Activated CD4-positive, alpha-beta T cell treated with anti-CD3 and anti-CD28 coated beads, Interleukin-2, amount 10 ng/mL, durations not matched to agents 7 days and 5 days (primary cell): ENCODE measurements at regions of chr19 and their contacts with region 1.

Region 1: DNA sequence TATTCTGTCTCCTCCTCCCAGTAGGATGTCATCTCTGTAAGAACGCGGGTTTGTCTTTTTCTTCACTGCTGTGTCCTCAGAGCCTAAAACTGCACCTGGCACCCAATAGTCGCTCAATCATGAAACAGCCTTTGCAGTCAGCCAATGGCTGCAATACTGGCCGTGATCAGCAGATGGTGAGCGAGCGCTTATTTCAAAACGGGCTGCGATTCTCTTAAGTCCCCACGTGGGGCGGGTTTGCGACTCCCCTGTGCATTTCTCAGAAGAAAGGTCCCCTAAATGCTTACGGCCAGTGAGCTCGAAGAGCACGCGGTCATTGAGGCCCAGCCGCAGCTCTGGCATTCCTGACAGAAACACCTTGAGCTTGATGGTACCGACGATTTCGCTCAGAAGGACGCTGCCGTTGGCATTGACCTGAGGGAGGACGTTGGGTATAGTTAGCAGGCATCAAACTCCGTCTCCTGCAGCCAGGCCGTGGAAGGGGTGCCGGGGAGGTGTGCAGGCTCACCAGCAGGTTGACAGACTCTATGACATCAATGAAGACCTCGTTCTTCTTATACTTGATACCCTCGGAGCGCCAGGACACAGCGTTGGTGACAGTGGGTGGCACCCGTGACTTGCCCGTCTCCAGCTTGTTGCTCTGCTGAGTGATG is 6.0 kb downstream of the AP1M2 start:
- DNase-seq: peak; percentile 93
- H3K4me3 Mint-ChIP-seq: no peak overlapping the region
- H3K27ac Mint-ChIP-seq: no peak overlapping the region
- H3K4me1 Mint-ChIP-seq: peaks cover 26% of the 10 kb centered on the region
- H3K27me3 Mint-ChIP-seq: no peaks in the 10 kb centered on the region

Region 2: GRCh38 chr19:10568826-10569651 is 12.1 kb before region 1 on chr19 and contains the start of gene CDKN2D:
- CTCF ChIA-PET with region 1: interaction called, 17 read pairs
- POLR2A ChIA-PET with region 1: no interaction called
- DNase-seq: peak; percentile 100
- H3K4me3 Mint-ChIP-seq: peak within 1 kb of the TSS; percentile 98
- H3K27ac Mint-ChIP-seq: peak within 1 kb of the TSS; percentile 97
- H3K4me1 Mint-ChIP-seq: peaks cover 41% of the 10 kb centered on the region
- H3K27me3 Mint-ChIP-seq: no peaks in the 10 kb centered on the region
- total RNA-seq, gene CDKN2D: 78.6 to 88.9 TPM

Region 3: DNA sequence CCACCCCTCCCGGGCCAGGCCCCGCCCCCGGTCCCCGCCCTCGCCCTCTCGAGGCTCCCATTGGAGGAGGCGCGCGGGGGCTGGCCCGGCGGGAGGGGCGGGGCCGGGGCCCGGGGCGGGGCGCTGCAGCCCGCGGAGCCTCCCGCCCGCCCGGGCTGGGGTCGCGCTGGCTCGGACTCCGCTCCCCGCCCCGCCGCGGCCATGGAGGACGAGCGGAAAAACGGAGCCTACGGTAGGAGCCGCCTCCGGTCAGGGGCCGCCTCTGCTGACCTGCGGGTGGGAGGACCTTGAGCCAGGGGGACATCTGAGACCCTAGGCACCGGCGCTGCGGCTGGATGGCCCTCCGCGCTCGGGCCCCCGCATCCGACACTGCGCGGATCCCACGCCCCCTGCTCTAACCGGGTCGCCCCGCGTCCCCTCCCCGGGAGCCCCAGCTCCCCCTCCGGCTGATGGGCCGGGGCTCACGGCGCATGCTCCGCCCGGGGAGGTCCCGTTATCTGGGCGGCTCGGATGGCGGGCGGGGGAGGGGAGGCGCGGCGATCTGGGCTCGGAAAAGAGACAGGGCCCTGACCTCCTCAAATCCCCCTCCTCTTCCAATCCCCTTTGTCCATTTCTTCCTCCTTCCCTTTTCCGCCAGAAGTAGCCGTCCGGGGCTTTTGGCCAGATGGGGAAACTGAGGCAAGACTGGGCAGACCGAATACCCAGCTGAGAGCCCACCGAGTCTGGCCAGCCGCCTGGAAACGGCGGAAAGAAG is 21.4 kb after region 1 on chr19:
- CTCF ChIA-PET with region 1: interaction called, 21 read pairs
- POLR2A ChIA-PET with region 1: no interaction called
- DNase-seq: peak; percentile 87
- H3K4me3 Mint-ChIP-seq: peak overlapping the region; percentile 89
- H3K27ac Mint-ChIP-seq: peak overlapping the region; percentile 100
- H3K4me1 Mint-ChIP-seq: peaks cover 22% of the 10 kb centered on the region
- H3K27me3 Mint-ChIP-seq: peaks cover 8% of the 10 kb centered on the region

Region 4: DNA sequence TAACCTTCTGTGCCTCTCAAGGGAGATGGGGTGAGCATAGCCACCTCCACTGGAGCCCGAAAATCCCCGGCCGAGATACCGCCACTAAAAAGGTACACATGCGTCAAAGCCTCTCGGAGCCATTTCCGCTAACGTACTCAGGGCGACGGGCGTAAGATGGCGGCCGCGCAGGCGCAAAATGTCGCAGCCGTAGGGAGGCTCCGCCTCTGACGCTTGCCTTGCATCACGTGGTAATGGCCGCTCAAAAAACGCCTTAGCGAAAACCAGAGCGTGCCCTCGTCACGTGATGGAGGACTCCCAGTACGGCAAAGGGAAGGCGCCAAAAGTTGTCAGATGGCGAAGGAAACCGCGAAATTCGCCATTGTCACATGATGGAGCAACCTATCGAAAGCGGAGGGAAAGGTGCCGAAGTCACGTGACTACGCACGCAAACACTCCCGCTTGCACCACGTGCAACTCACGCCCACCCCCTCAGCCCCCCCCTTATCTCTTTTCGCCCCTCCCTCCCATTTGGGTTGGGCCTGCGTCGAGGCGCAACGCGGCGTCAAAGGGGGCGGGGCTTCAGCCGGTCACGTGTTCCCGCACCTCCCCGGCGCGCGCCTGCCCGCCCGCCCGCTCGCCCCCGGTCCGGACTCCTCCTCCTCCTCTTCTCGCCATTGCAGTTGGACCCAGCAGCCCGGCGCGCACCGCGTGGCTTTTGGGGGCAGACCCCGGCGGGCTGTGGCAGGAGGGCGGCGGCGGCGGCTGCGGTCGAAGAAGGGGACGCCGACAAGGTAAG is 72.8 kb after region 1 on chr19 and contains the start of gene ILF3:
- CTCF ChIA-PET with region 1: interaction called, 19 read pairs
- POLR2A ChIA-PET with region 1: no interaction called
- DNase-seq: peak; percentile 100
- H3K4me3 Mint-ChIP-seq: peak within 1 kb of the TSS; percentile 86
- H3K27ac Mint-ChIP-seq: peak within 1 kb of the TSS; percentile 99
- H3K4me1 Mint-ChIP-seq: peaks cover 43% of the 10 kb centered on the region
- H3K27me3 Mint-ChIP-seq: no peaks in the 10 kb centered on the region
- total RNA-seq, gene ILF3: 385 to 389 TPM